ENCODE measurements at regions of chr15 and their contacts with region 1.

Region 1: DNA sequence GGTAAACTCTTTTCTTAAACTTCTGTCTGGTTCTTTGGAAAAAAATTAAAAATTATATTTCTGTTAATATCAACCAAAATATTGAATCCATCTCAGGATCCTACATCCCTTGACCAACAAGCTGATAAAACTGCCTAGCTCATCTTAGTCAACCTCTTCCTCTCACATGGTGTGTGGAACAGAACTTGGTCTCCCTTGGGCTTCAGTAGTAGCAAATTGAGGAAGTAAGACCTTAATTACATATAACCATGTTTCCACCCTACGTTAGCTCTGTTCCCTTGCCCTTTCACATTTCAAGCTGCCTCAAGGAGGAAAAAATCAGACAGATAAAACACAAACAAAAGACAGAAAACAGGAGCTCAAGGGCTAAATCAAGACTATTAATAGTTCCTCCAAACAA is 116.4 kb downstream of the GREM1 start:
- DNase-seq: no peak
- ATAC-seq: peak; percentile 99
- H3K4me3 Mint-ChIP-seq: peak overlapping the region; percentile 3
- H3K27ac Mint-ChIP-seq: no peak overlapping the region
- H3K4me1 Mint-ChIP-seq: peaks cover 26% of the 10 kb centered on the region
- H3K27me3 Mint-ChIP-seq: peaks cover 20% of the 10 kb centered on the region
- CTCF ChIP-seq: no peak

Region 2: GRCh38 chr15:32817577-32817976 is 16.6 kb before region 1 on chr15:
- CTCF ChIA-PET with region 1: no interaction called
- POLR2A ChIA-PET with region 1: no interaction called
- intact Hi-C with region 1: no loop called
- DNase-seq: no peak
- ATAC-seq: no peak
- H3K4me3 Mint-ChIP-seq: no peak overlapping the region
- H3K27ac Mint-ChIP-seq: no peak overlapping the region
- H3K4me1 Mint-ChIP-seq: peaks cover 2% of the 10 kb centered on the region
- H3K27me3 Mint-ChIP-seq: peaks cover 12% of the 10 kb centered on the region
- CTCF ChIP-seq: no peak

Region 3: GRCh38 chr15:32870240-32871033 is 36.3 kb after region 1 on chr15:
- CTCF ChIA-PET with region 1: no interaction called
- POLR2A ChIA-PET with region 1: no interaction called
- intact Hi-C with region 1: loop called (anchors 1 kb)
- DNase-seq: peak; percentile 57
- ATAC-seq: peak; percentile 86
- H3K4me3 Mint-ChIP-seq: no peak overlapping the region
- H3K27ac Mint-ChIP-seq: peak overlapping the region; percentile 48
- H3K4me1 Mint-ChIP-seq: peaks cover 16% of the 10 kb centered on the region
- H3K27me3 Mint-ChIP-seq: peaks cover 2% of the 10 kb centered on the region
- CTCF ChIP-seq: no peak

Region 4: GRCh38 chr15:32908135-32908801 is 74.1 kb after region 1 on chr15:
- CTCF ChIA-PET with region 1: no interaction called
- POLR2A ChIA-PET with region 1: interaction called, 5 read pairs
- intact Hi-C with region 1: loop called (anchors 5 kb)
- DNase-seq: peak; percentile 24
- ATAC-seq: peak; percentile 85
- H3K4me3 Mint-ChIP-seq: peak overlapping the region; percentile 66
- H3K27ac Mint-ChIP-seq: peak overlapping the region; percentile 79
- H3K4me1 Mint-ChIP-seq: peaks cover 66% of the 10 kb centered on the region
- H3K27me3 Mint-ChIP-seq: no peaks in the 10 kb centered on the region
- CTCF ChIP-seq: no peak

Region 5: GRCh38 chr15:33154351-33155166 is 320.4 kb after region 1 on chr15:
- CTCF ChIA-PET with region 1: no interaction called
- POLR2A ChIA-PET with region 1: no interaction called
- intact Hi-C with region 1: no loop called
- DNase-seq: no peak
- ATAC-seq: no peak
- H3K4me3 Mint-ChIP-seq: no peak overlapping the region
- H3K27ac Mint-ChIP-seq: no peak overlapping the region
- H3K4me1 Mint-ChIP-seq: peaks cover 14% of the 10 kb centered on the region
- H3K27me3 Mint-ChIP-seq: peaks cover 8% of the 10 kb centered on the region
- CTCF ChIP-seq: no peak